PC-9 (cell line): ENCODE measurements at regions of chr16 and their contacts with region 1.

Region 1: DNA sequence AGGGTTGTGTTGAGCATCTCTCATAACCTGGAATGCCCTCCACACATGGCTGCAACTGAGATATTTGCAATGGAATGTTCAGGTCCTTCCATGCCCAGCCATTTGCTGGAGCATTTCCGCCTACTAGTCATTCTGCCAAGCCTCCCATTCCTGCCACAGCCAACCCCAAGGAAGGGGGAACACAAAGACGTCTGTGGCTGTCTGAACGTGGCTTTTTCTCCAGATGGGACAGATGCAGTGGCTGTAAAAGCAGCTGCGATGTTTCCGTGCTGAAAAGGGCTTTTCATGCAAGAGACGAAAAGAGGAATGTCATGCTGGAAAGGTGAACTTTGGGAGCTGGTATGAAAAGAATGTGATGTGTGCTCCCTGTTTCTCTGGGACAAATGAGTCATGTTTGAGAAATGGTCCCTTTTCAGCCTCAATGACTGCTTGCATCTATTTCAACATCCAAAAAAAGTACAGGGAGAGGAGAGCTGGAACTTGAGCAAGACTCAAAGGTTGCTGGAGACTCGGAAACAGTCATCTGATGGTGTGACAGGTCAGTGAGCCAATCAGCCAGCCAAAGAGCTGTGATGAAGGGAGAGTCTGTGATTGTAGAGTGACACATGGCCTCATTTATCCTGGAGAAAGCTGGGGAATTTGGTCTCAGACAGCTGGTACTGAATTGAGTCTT is 208.9 kb downstream of the SHISA9 start:
- DNase-seq: peak; percentile 88 to 99
- H3K4me3 ChIP-seq: peak overlapping the region; percentile 47; the same call in 1 of the 2 replicates
- H3K27ac ChIP-seq: peak overlapping the region; percentile 97
- H3K4me1 ChIP-seq: peaks cover 60% of the 10 kb centered on the region
- H3K27me3 ChIP-seq: no peaks in the 10 kb centered on the region
- CTCF ChIP-seq: no peak

Region 2: DNA sequence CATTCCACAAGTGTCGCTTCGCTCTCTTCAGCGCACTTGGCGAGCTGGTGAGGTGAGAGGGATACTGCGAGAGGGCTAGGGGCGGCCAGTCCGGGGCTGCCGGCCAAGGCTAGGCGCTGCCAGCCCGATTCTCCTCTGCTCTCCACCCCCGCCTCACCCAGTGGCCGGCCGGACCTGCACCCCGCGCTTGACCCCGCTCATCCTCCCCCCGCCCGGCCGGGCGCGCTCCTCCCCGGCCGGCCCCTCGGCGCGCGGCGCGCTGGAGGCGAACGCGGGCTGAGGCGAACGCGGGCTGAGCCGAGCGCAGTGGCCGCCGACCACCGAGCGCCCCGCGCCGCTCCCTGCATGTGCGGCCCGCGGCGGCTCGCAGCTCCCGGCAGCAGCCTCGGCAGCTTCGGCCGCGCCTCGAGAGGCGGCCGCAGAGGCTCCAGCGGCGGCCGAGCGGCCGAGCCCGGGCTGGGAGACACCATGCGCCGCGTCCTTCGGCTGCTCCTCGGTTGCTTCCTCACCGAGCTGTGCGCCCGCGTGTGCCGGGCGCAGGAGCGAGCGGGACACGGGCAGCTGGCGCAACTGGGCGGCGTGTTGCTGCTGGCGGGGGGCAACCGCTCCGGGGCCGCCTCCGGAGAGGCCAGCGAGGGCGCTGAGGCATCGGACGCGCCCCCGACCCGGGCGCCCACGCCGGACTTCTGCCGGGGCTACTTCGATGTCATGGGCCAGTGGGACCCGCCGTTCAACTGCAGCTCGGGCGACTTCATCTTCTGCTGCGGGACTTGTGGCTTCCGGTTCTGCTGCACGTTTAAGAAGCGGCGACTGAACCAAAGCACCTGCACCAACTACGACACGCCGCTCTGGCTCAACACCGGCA is 208.4 kb before region 1 on chr16 and contains the start of gene SHISA9:
- CTCF ChIA-PET with region 1: no interaction called
- POLR2A ChIA-PET with region 1: interaction called, 12 read pairs
- intact Hi-C with region 1: loop called (anchors 1 kb)
- DNase-seq: no peak
- H3K4me3 ChIP-seq: peak within 1 kb of the TSS; percentile 94
- H3K27ac ChIP-seq: peak within 1 kb of the TSS; percentile 99
- H3K4me1 ChIP-seq: peaks cover 50% of the 10 kb centered on the region
- H3K27me3 ChIP-seq: no peaks in the 10 kb centered on the region
- CTCF ChIP-seq: no peak
- total RNA-seq, gene SHISA9: 64.5 and 80.5 TPM in 2 replicates

Region 3: DNA sequence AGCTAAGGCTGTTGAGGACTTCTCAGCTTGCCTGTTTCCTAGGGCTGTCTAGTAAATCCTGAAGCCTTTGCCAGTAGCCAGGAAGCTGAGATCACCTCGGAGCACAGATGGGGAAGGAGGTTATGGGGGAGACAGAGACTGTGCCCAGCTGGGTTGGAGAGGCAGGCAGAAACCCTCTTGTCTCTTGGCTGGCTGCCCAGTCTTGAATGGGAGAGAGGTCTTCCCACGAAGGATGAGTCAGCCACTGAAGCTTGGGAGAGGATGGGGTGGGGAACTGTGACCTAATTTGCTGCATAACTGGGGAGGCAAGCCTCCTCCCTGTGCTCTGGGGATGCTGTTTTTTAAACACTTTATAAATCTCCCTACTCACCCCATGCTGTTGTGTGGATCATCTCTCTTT is 139.0 kb before region 1 on chr16:
- CTCF ChIA-PET with region 1: no interaction called
- POLR2A ChIA-PET with region 1: no interaction called
- intact Hi-C with region 1: loop called (anchors 2 kb)
- DNase-seq: peak; percentile 90 to 93
- H3K4me3 ChIP-seq: peak overlapping the region; percentile 13; the same call in 1 of the 2 replicates
- H3K27ac ChIP-seq: peak overlapping the region; percentile 81
- H3K4me1 ChIP-seq: peaks cover 49% of the 10 kb centered on the region
- H3K27me3 ChIP-seq: no peaks in the 10 kb centered on the region
- CTCF ChIP-seq: no peak

Region 4: GRCh38 chr16:13178318-13178717 is 68.1 kb after region 1 on chr16:
- CTCF ChIA-PET with region 1: no interaction called
- POLR2A ChIA-PET with region 1: no interaction called
- intact Hi-C with region 1: no loop called
- DNase-seq: no peak
- H3K4me3 ChIP-seq: no peak overlapping the region
- H3K27ac ChIP-seq: no peak overlapping the region
- H3K4me1 ChIP-seq: peaks cover 27% of the 10 kb centered on the region
- H3K27me3 ChIP-seq: no peaks in the 10 kb centered on the region
- CTCF ChIP-seq: no peak

Region 5: DNA sequence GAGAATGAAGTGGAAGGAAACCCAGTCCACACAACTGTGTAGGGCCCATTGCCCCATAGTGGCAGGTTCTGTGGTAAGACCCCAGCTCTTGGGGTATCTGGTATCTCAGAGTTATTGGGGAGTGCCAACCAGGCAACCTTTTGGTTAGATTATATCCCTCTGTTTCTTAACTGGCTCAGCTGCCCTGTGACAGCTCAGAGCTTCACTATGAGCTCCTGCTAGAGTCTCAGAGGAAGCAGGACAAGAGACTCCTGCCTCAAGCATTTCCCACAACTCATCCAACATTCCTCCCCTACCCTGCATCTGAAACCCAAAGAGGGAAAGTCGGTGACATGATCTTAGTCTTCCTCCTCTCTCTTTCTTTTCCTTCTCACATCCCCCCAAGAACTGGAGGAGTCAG is 83.5 kb after region 1 on chr16:
- CTCF ChIA-PET with region 1: interaction called, 16 read pairs
- POLR2A ChIA-PET with region 1: no interaction called
- intact Hi-C with region 1: no loop called
- DNase-seq: peak in 1 of 2 experiments; percentile 38
- H3K4me3 ChIP-seq: no peak overlapping the region
- H3K27ac ChIP-seq: no peak overlapping the region
- H3K4me1 ChIP-seq: peaks cover 17% of the 10 kb centered on the region
- H3K27me3 ChIP-seq: no peaks in the 10 kb centered on the region
- CTCF ChIP-seq: no peak

Region 6: DNA sequence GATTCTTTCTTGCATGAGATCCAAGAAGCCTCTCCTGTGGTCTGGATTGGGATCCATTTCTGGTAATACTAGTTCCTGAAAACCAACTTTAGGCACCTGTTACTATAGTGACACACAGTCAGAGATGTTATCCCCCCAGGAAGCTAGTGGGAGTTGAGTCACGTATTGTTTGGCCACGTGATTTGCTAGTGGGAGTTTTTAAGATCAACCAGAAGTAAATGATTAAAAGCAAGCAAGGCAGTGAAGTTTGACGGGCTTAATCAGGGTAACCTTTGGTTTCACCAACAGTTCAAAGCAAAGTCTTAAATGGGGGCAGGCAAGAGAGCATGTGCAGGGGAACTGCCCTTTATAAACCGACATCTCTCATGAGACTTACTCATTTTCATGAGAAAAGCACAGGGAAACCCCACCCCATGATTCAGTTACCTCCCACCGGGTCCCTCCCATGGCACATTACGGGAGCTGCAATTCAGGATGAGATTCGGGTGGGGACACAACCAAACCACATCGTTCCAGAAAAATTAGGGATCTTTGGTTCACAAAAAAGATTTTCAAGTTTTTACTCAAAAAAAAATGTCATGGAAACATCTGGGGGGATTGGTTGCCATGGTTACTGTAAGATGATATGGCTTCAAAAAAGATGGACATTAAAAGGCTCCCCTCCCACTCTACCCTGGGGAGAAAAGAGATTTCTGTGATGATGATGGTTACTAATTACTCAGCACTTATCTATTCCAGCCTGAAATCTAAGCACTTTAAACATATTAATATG is 326.6 kb after region 1 on chr16:
- CTCF ChIA-PET with region 1: no interaction called
- POLR2A ChIA-PET with region 1: no interaction called
- intact Hi-C with region 1: loop called (anchors 1 kb)
- DNase-seq: peak; percentile 58 to 73
- H3K4me3 ChIP-seq: no peak overlapping the region
- H3K27ac ChIP-seq: no peak overlapping the region
- H3K4me1 ChIP-seq: peaks cover 25% of the 10 kb centered on the region
- H3K27me3 ChIP-seq: no peaks in the 10 kb centered on the region
- CTCF ChIP-seq: no peak

Region 7: GRCh38 chr16:13767215-13767614 is 657.0 kb after region 1 on chr16:
- CTCF ChIA-PET with region 1: no interaction called
- POLR2A ChIA-PET with region 1: no interaction called
- intact Hi-C with region 1: loop called (anchors 1 kb)
- DNase-seq: peak in 1 of 2 experiments; percentile 11
- H3K4me3 ChIP-seq: no peak overlapping the region
- H3K27ac ChIP-seq: no peak overlapping the region
- H3K4me1 ChIP-seq: no peaks in the 10 kb centered on the region
- H3K27me3 ChIP-seq: peaks cover 73% of the 10 kb centered on the region
- CTCF ChIP-seq: 0 out of 2 replicates have a peak, but pooled peaks have one; percentile 33